Activated CD4-positive, alpha-beta T cell treated with anti-CD3 and anti-CD28 coated beads, Interleukin-2, amount 10 ng/mL, durations not matched to agents 7 days and 5 days (primary cell): ENCODE measurements at regions of chr20 and their contacts with region 1.

Region 1: GRCh38 chr20:5222919-5223634 is 93.7 kb downstream of the PROKR2 start:
- DNase-seq: peak; percentile 73
- H3K4me3 Mint-ChIP-seq: no peak overlapping the region
- H3K27ac Mint-ChIP-seq: no peak overlapping the region
- H3K4me1 Mint-ChIP-seq: peaks cover 2% of the 10 kb centered on the region
- H3K27me3 Mint-ChIP-seq: no peaks in the 10 kb centered on the region

Region 2: DNA sequence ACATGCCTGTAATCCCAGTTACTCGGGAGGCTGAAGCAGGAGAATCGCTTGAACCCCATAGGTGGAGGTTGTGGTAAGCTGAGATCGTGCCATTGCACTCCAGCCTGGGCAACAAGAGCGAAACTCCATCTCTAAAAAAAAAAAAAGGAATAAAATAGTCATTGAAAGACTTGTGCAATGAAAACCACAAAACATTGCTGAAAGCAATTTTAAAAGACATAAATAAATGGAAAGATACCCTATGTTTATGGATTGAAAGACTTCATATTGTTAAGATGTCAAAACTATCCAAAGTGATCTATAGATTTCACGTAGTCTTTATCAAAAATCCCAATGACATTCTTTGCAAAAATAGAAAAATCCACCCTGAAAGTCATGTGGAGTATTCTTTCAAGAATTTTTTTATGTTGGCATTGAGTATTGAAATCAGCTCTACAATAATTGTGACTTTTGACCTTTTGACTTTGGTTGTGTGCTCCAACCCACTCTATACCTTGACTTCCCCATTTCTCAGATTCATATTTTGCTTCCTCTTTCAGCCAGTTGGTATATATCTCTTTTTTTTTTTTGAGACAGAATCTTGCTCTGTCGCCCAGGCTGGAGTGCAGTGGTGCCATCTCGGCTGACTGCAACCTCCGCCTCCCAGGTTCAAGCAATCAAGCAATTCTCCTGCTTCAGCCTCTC is 176.3 kb before region 1 on chr20:
- CTCF ChIA-PET with region 1: no interaction called
- POLR2A ChIA-PET with region 1: no interaction called
- DNase-seq: no peak
- H3K4me3 Mint-ChIP-seq: no peak overlapping the region
- H3K27ac Mint-ChIP-seq: no peak overlapping the region
- H3K4me1 Mint-ChIP-seq: no peaks in the 10 kb centered on the region
- H3K27me3 Mint-ChIP-seq: peaks cover 19% of the 10 kb centered on the region

Region 3: GRCh38 chr20:5126512-5127203 is 96.4 kb before region 1 on chr20 and contains the start of gene CDS2:
- CTCF ChIA-PET with region 1: interaction called, 13 read pairs
- POLR2A ChIA-PET with region 1: no interaction called
- DNase-seq: peak; percentile 100
- H3K4me3 Mint-ChIP-seq: peak within 1 kb of the TSS; percentile 97
- H3K27ac Mint-ChIP-seq: peak within 1 kb of the TSS; percentile 97
- H3K4me1 Mint-ChIP-seq: peaks cover 59% of the 10 kb centered on the region
- H3K27me3 Mint-ChIP-seq: no peaks in the 10 kb centered on the region
- total RNA-seq, gene CDS2: 54.5 to 58.4 TPM

Region 4: DNA sequence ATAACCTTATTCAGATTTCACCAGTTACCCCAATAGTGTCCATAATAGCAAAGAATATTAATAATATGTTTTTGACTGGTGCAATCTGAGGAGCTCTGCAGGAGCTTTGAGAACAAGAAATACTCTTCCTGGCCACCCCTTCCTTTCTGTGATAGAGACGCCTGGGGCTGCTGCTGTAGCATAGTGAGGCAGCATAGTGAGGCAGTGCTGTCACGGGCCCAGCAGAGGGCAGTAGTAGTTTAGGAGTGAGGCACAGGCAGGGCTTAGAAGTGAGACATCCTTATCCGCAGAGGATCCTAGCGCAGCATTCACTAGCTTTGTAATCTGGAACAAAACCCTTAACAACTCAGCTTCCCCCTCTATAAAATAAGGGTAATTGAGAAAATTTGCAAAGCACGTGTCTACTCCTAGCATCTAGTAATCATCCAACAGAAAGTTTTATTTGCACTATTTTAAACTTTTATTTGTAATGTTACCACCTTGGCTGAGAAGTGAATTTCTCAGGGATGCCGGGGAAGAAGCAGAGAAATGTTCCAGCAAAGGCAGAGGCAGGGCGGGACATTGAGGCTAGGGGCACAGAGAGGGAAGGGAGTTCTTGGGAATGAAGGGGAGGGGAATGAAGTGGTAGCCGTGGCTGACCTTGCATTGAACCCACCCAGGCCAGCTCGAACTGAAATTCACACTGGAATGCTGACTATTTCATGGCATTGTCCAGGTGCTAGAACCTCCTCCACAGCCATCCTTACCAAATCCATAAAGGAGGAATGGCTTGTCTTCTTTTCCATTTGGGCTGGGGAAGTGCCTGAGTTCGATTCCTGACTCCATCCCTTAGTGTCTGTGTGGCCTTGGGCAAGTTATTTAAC is 17.5 kb before region 1 on chr20:
- CTCF ChIA-PET with region 1: interaction called, 11 read pairs
- POLR2A ChIA-PET with region 1: no interaction called
- DNase-seq: peak; percentile 76
- H3K4me3 Mint-ChIP-seq: no peak overlapping the region
- H3K27ac Mint-ChIP-seq: no peak overlapping the region
- H3K4me1 Mint-ChIP-seq: no peaks in the 10 kb centered on the region
- H3K27me3 Mint-ChIP-seq: no peaks in the 10 kb centered on the region